ENCODE measurements at regions of chr2 and their contacts with region 1.

Region 1: DNA sequence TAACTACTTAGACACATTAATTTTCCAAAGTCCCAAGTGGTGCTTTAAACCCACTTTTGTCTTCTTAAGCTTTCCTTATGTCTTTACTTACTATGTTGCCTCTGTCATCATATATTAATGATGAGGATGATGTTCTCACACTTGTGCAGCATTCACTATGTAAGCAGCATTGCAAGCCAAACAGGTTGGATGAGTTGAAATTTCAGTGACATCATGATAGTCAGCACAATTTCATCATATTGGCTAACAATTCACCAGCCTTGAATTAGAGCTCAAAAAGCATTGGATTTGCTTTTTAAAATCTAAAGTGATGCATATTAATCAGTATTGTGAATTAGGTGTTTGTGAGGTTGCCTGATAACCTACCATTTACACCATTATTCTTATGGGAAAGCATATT is 7.7 kb downstream of the APLF start:
- DNase-seq: no peak
- H3K4me3 ChIP-seq: no peak overlapping the region
- H3K27ac ChIP-seq: no peak overlapping the region
- H3K4me1 ChIP-seq: no peaks in the 10 kb centered on the region
- H3K27me3 ChIP-seq: no peaks in the 10 kb centered on the region
- CTCF ChIP-seq: no peak
- EP300 ChIP-seq: no peak
- POLR2A ChIP-seq: no peak
- RAD21 ChIP-seq: no peak

Region 2: GRCh38 chr2:68487773-68488355 is 12.8 kb after region 1 on chr2:
- CTCF ChIA-PET with region 1: interaction called, 13 read pairs
- POLR2A ChIA-PET with region 1: no interaction called
- DNase-seq: no peak
- H3K4me3 ChIP-seq: no peak overlapping the region
- H3K27ac ChIP-seq: no peak overlapping the region
- H3K4me1 ChIP-seq: 0 out of 7 replicates have a peak, but pooled peaks cover 0 to 3% (median 0%) of the 10 kb centered on the region in 4 experiments
- H3K27me3 ChIP-seq: no peaks in the 10 kb centered on the region
- CTCF ChIP-seq: peak in 1 of 3 experiments; percentile 17; a peak in 2 of 4 replicates
- EP300 ChIP-seq: no peak
- POLR2A ChIP-seq: no peak
- RAD21 ChIP-seq: peak in 1 of 2 experiments; percentile 44; a peak in 3 of 4 replicates

Region 3: GRCh38 chr2:68506170-68506569 is 31.1 kb after region 1 on chr2:
- CTCF ChIA-PET with region 1: no interaction called
- POLR2A ChIA-PET with region 1: no interaction called
- DNase-seq: no peak
- H3K4me3 ChIP-seq: no peak overlapping the region
- H3K27ac ChIP-seq: no peak overlapping the region
- H3K4me1 ChIP-seq: no peaks in the 10 kb centered on the region; a peak in 1 of 7 replicates
- H3K27me3 ChIP-seq: no peaks in the 10 kb centered on the region
- CTCF ChIP-seq: no peak
- EP300 ChIP-seq: no peak
- POLR2A ChIP-seq: no peak
- RAD21 ChIP-seq: no peak

Region 4: DNA sequence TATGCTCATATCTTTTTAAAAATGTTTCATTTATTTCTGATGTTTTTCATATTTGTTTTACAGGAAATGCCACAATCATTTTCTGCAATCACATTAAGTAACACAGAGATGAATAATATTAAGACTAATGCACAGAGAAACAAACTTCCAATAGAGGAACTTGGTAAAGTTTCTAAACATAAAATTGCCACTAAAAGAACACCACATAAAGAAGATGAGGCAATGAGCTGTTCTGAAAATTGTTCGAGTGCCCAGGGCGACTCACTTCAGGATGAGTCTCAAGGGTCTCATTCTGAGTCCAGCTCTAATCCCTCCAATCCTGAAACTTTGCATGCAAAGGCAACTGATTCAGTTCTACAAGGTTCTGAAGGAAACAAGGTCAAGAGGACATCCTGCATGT is 62.7 kb after region 1 on chr2:
- CTCF ChIA-PET with region 1: no interaction called
- POLR2A ChIA-PET with region 1: no interaction called
- DNase-seq: no peak
- H3K4me3 ChIP-seq: no peak overlapping the region
- H3K27ac ChIP-seq: no peak overlapping the region
- H3K4me1 ChIP-seq: no peaks in the 10 kb centered on the region
- H3K27me3 ChIP-seq: no peaks in the 10 kb centered on the region
- CTCF ChIP-seq: no peak
- EP300 ChIP-seq: no peak
- POLR2A ChIP-seq: no peak
- RAD21 ChIP-seq: no peak